Activated B cell treated with CpG ODN at 0.5 μM for 24 hours (primary cell): ENCODE measurements at regions of chr6 and their contacts with region 1.

Region 1: DNA sequence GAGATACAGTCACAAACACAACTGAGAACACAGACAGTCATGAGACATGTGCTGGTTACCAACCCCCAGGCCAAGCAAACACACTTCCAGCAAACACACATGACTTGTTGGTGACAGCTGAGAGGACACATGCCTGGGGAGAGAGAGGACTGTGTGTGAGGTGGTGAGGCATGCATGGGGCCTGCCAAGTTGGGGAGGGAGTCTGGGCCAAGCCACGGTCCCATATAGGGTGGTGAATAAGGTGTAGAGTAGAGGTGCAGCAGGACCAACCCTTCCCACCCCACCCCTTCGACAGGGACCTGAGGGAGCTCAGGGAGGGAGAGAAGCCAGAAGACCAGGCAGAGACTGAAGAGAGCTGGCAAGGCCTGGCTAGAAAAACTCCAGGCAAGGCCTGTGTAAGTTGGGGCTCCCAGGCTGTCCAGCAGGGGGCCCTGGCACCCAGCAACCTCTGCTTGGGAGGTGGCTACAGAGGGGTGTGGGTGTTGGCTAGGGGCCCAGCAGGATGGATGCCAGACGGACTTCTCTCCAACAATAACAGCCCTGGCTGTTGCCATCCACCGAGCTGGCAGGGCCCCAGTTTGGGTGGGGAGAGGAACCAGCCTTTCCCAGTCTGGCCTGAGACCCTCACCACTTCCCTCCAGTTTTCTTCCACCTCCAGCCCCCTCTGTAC is 2.0 kb upstream of the SLC29A1 start:
- DNase-seq: peak; percentile 53
- ATAC-seq: peak; percentile 51
- H3K4me3 Mint-ChIP-seq: no peak overlapping the region
- H3K27ac Mint-ChIP-seq: no peak overlapping the region
- H3K4me1 Mint-ChIP-seq: peaks cover 39% of the 10 kb centered on the region
- H3K27me3 Mint-ChIP-seq: no peaks in the 10 kb centered on the region
- CTCF ChIP-seq: no peak

Region 2: DNA sequence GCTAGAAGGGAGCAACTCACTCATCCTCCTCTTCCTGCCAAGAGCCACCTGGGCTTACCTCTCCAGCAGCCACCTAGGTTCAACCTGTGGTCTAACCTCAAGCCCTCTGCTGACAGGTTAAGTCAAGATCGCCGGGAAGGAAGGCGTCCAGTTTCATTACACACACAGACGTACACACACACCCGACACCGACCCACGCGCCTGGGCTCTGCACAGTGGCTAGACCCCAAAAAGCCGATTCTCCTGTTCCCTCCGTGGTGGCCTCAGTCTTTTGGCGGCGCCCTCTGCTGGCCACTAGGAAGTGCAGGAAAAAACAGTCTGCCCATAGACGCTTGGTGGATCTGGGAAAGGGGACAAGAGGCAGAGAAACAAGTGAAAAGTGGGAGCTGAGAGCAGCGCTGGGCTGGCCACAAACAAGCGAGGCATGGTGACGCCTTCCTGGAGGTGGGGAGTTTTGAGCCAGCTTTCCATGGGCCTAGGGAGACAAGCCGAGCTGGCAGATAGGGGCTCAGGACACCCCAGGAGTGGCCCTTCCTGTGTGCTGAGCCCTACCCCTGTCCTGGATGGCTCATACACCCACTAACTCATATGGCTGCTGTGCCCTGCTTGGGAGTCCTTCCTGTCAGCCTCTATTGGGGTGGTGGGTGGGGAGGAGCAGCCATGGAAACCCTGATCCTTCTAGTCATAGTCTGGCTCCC is 146.8 kb before region 1 on chr6:
- CTCF ChIA-PET with region 1: no interaction called
- POLR2A ChIA-PET with region 1: no interaction called
- intact Hi-C with region 1: no loop called
- DNase-seq: peak; percentile 56
- ATAC-seq: peak; percentile 60
- H3K4me3 Mint-ChIP-seq: peak overlapping the region; percentile 66
- H3K27ac Mint-ChIP-seq: peak overlapping the region; percentile 7
- H3K4me1 Mint-ChIP-seq: peaks cover 20% of the 10 kb centered on the region
- H3K27me3 Mint-ChIP-seq: peaks cover 30% of the 10 kb centered on the region
- CTCF ChIP-seq: peak; percentile 21

Region 3: GRCh38 chr6:44127186-44128019 is 94.0 kb before region 1 on chr6 and contains the starts of genes MRPL14 and TMEM63B:
- CTCF ChIA-PET with region 1: no interaction called
- POLR2A ChIA-PET with region 1: no interaction called
- intact Hi-C with region 1: loop called (anchors 5 kb)
- DNase-seq: peak; percentile 89
- ATAC-seq: peak; percentile 87
- H3K4me3 Mint-ChIP-seq: peak within 1 kb of the TSS; percentile 93
- H3K27ac Mint-ChIP-seq: peak within 1 kb of the TSS; percentile 95
- H3K4me1 Mint-ChIP-seq: peaks cover 50% of the 10 kb centered on the region
- H3K27me3 Mint-ChIP-seq: no peaks in the 10 kb centered on the region
- CTCF ChIP-seq: no peak
- total RNA-seq, gene MRPL14: 40.5 and 45.5 TPM in 2 replicates
- total RNA-seq, gene TMEM63B: 12.3 and 13.9 TPM in 2 replicates

Region 4: GRCh38 chr6:44237813-44238433 is 16.5 kb after region 1 on chr6:
- CTCF ChIA-PET with region 1: interaction called, 15 read pairs
- POLR2A ChIA-PET with region 1: interaction called, 14 read pairs
- intact Hi-C with region 1: loop called (anchors 1 kb)
- DNase-seq: peak; percentile 87
- ATAC-seq: peak; percentile 91
- H3K4me3 Mint-ChIP-seq: peak overlapping the region; percentile 95
- H3K27ac Mint-ChIP-seq: peak overlapping the region; percentile 90
- H3K4me1 Mint-ChIP-seq: peaks cover 17% of the 10 kb centered on the region
- H3K27me3 Mint-ChIP-seq: no peaks in the 10 kb centered on the region
- CTCF ChIP-seq: peak; percentile 84

Region 5: GRCh38 chr6:44312901-44313788 is 91.7 kb after region 1 on chr6 and contains the start of gene AARS2:
- CTCF ChIA-PET with region 1: no interaction called
- POLR2A ChIA-PET with region 1: no interaction called
- intact Hi-C with region 1: loop called (anchors 1 kb)
- DNase-seq: peak; percentile 94
- ATAC-seq: peak; percentile 96
- H3K4me3 Mint-ChIP-seq: peak within 1 kb of the TSS; percentile 96
- H3K27ac Mint-ChIP-seq: peak within 1 kb of the TSS; percentile 91
- H3K4me1 Mint-ChIP-seq: peaks cover 14% of the 10 kb centered on the region
- H3K27me3 Mint-ChIP-seq: peaks cover 6% of the 10 kb centered on the region
- CTCF ChIP-seq: peak; percentile 85
- total RNA-seq, gene AARS2: 19.1 and 22.4 TPM in 2 replicates

Region 6: DNA sequence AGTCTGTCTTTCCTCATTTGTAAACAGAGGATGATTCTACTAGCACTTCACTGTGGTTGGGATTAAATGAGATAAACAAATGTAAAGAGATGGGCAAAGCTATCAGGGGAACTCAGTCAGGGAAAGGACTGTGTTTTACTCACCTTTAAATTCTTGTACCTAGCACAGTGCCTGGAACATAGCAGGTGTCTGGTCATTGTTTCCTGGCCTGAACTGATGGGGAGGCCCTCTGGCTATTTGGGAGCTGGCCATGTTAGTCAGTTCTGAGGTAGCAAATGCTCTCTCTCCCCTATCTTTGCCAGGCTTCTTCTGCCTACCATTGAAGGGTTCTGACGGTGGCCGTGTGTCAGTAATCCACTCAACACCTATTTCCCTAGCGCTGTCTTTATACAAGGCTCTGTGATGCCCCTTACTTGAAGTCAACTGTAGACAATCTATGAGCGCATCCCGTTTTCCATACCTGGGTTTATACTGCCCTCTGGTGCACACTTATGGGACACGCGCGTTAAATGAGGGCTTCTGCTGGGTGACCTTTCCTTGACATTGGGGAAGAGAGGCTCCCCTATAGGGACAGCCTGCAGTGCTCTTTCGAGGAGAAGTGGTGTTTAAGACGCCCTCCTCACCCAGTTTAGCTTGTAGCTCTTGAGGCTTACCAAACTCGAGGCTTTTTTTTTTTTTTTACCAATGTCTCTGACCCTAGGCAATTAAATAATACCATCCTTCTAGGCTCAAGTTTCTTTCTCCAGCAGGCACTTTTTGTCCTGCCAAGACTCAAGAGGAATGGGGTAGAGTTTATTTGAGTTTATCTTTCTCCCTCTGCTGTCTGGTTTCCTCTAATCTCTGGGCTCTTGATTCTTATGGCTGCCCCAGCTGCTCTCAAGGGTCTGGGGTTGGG is 117.0 kb after region 1 on chr6:
- CTCF ChIA-PET with region 1: no interaction called
- POLR2A ChIA-PET with region 1: no interaction called
- intact Hi-C with region 1: loop called (anchors 5 kb)
- DNase-seq: peak; percentile 36
- ATAC-seq: peak; percentile 94
- H3K4me3 Mint-ChIP-seq: no peak overlapping the region
- H3K27ac Mint-ChIP-seq: no peak overlapping the region
- H3K4me1 Mint-ChIP-seq: no peaks in the 10 kb centered on the region
- H3K27me3 Mint-ChIP-seq: peaks cover 22% of the 10 kb centered on the region
- CTCF ChIP-seq: peak; percentile 58

Region 7: GRCh38 chr6:44387346-44388133 is 166.1 kb after region 1 on chr6 and contains the start of gene CDC5L:
- CTCF ChIA-PET with region 1: no interaction called
- POLR2A ChIA-PET with region 1: no interaction called
- intact Hi-C with region 1: loop called (anchors 1 kb)
- DNase-seq: peak; percentile 82
- ATAC-seq: peak; percentile 91
- H3K4me3 Mint-ChIP-seq: peak within 1 kb of the TSS; percentile 94
- H3K27ac Mint-ChIP-seq: peak within 1 kb of the TSS; percentile 96
- H3K4me1 Mint-ChIP-seq: peaks cover 41% of the 10 kb centered on the region
- H3K27me3 Mint-ChIP-seq: no peaks in the 10 kb centered on the region
- CTCF ChIP-seq: no peak
- total RNA-seq, gene CDC5L: 20.0 and 20.2 TPM in 2 replicates